Naive thymus-derived CD8-positive, alpha-beta T cell (primary cell): ENCODE measurements at regions of chrX and their contacts with region 1.

Region 1: DNA sequence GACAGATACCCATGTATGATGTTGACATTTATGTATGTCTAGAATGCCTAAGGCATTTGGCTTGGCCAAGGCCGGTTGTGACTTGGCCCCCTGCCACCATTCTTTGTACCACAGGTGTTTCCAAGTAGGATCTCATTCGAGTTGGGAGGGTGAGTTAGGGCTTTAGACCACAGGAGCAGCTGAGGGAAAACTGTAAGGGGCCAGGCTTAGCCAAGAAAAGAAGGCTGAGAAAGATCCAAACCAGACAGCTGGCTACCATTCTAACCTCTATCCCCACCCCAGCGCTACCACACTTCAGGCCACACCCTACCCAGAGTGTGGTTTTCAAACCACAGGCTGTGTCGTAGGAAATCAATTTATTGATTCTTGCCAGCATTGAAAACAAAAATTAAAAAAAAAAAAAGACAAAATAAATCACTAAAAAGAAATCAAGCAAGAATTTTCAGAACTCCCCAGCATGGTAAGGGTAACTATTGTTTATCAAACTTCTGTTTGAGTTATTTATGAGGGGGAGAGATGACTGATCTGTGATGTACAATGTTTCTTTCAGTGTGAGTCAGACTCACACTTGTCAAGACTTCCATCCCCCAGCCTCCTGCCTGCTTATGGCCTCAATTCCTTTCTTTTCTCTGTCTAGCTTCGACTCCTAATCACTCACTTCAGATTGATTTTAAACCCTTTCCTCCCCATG is 9.9 kb downstream of the TMSB4X start:
- DNase-seq: peak in 7 of 10 donors; percentile 33 to 70 (median 61)
- ATAC-seq: peak; percentile 71 to 74
- H3K4me3 Mint-ChIP-seq: peak overlapping the region; percentile 51 to 84 (median 73)
- H3K27ac Mint-ChIP-seq: peak overlapping the region; percentile 93 to 100 (median 98)
- H3K4me1 Mint-ChIP-seq: peaks cover 23 to 80% (median 62%) of the 10 kb centered on the region in 4 donors
- H3K27me3 Mint-ChIP-seq: no peaks in the 10 kb centered on the region

Region 2: DNA sequence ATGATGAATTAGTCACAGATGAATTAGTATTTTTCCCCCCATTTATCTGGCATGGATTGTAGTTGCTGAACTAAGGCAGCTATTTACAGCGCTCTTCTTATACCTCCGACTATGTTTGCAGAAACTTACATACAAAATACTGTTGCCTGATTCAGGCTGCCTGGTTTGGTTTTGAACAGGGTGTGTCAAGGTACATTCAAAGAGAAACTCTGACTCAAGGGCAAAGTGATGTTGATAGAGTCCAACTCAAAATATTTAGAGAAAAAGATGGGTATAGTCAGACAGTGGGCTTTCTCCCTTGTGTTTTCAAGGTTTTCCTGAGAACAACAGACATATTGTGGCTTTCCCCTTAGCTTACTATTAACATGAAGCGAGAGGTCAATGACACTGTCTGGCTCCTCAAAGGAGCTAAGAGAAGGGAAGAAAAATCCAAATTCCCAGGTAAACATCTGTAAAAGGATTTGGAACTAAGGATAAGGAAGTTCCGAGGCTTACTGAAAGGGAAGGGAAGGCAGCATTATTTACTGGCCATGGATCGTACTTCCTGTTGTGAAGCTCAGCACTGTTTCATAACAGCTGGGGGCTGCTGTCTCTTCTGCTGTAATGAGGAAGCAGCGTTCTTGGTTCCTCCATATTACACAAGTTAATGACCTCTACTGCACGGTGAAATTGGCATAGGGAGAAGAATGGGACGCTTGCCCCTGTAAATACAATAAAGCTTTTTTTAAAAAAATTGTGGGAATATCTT is 28.8 kb after region 1 on chrX:
- POLR2A ChIA-PET with region 1: interaction called, 329 read pairs
- DNase-seq: peak in 2 of 10 donors; percentile 26 to 34
- ATAC-seq: peak; percentile 82 to 84
- H3K4me3 Mint-ChIP-seq: peak overlapping the region; percentile 1 to 71 (median 56)
- H3K27ac Mint-ChIP-seq: peak overlapping the region; percentile 35 to 99 (median 89)
- H3K4me1 Mint-ChIP-seq: peaks cover 10 to 70% (median 60%) of the 10 kb centered on the region in 4 donors
- H3K27me3 Mint-ChIP-seq: no peaks in the 10 kb centered on the region